Activated naive CD4-positive, alpha-beta T cell treated with anti-CD3 and anti-CD28 coated beads for 36 hours (primary cell): ENCODE measurements at regions of chr3 and their contacts with region 1.

Region 1: DNA sequence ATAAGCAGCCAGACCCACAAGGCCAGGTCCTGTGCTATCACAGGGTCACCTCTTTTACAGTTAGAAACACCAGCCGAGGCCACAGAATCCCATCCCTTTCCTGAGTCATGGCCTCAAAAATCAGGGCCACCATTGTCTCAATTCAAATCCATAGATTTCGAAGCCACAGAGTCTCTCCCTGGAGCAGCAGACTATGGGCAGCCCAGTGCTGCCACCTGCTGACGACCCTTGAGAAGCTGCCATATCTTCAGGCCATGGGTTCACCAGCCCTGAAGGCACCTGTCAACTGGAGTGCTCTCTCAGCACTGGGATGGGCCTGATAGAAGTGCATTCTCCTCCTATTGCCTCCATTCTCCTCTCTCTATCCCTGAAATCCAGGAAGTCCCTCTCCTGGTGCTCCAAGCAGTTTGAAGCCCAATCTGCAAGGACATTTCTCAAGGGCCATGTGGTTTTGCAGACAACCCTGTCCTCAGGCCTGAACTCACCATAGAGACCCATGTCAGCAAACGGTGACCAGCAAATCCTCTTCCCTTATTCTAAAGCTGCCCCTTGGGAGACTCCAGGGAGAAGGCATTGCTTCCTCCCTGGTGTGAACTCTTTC is 39.6 kb downstream of the TGM4 start:
- DNase-seq: peak; percentile 74
- H3K4me3 Mint-ChIP-seq: no peak overlapping the region
- H3K27ac Mint-ChIP-seq: no peak overlapping the region
- H3K4me1 Mint-ChIP-seq: no peaks in the 10 kb centered on the region
- H3K27me3 Mint-ChIP-seq: peaks cover 9% of the 10 kb centered on the region

Region 2: GRCh38 chr3:44323341-44323955 is 590.5 kb before region 1 on chr3:
- CTCF ChIA-PET with region 1: no interaction called
- intact Hi-C with region 1: loop called (anchors 5 kb)
- DNase-seq: peak; percentile 79
- H3K4me3 Mint-ChIP-seq: no peak overlapping the region
- H3K27ac Mint-ChIP-seq: no peak overlapping the region
- H3K4me1 Mint-ChIP-seq: peaks cover 3% of the 10 kb centered on the region
- H3K27me3 Mint-ChIP-seq: peaks cover 3% of the 10 kb centered on the region

Region 3: DNA sequence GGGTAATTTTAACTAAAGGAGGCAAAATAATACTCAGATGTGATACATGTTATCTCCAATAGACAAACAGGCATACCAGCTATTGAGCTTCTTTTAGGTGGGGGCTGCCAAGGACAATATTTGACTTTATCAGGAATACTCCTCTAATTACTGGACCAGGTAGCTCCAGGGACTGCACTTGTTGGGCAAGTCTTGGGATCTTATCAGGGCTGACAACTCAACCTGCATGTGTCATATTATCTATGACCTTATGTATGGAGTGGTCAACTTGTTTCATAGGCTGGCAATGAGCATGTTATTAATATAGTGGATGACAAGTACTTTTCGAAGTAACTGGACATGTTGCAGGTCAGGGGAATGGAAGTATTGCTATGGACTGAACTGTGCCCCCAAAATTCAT is 421.5 kb before region 1 on chr3:
- CTCF ChIA-PET with region 1: no interaction called
- intact Hi-C with region 1: no loop called
- DNase-seq: no peak
- H3K4me3 Mint-ChIP-seq: no peak overlapping the region
- H3K27ac Mint-ChIP-seq: no peak overlapping the region
- H3K4me1 Mint-ChIP-seq: no peaks in the 10 kb centered on the region
- H3K27me3 Mint-ChIP-seq: no peaks in the 10 kb centered on the region

Region 4: GRCh38 chr3:44529927-44530326 is 384.0 kb before region 1 on chr3:
- CTCF ChIA-PET with region 1: interaction called, 35 read pairs
- intact Hi-C with region 1: loop called (anchors 1 kb)
- DNase-seq: peak; percentile 44
- H3K4me3 Mint-ChIP-seq: no peak overlapping the region
- H3K27ac Mint-ChIP-seq: no peak overlapping the region
- H3K4me1 Mint-ChIP-seq: no peaks in the 10 kb centered on the region
- H3K27me3 Mint-ChIP-seq: peaks cover 17% of the 10 kb centered on the region

Region 5: GRCh38 chr3:44861412-44862220 is 52.4 kb before region 1 on chr3 and contains the start of gene TMEM42:
- CTCF ChIA-PET with region 1: no interaction called
- intact Hi-C with region 1: loop called (anchors 1 kb)
- DNase-seq: peak; percentile 86
- H3K4me3 Mint-ChIP-seq: peak within 1 kb of the TSS; percentile 84
- H3K27ac Mint-ChIP-seq: peak within 1 kb of the TSS; percentile 78
- H3K4me1 Mint-ChIP-seq: peaks cover 38% of the 10 kb centered on the region
- H3K27me3 Mint-ChIP-seq: no peaks in the 10 kb centered on the region
- total RNA-seq, gene TMEM42: 13.9 to 15.8 TPM

Region 6: GRCh38 chr3:45426161-45426560 is 512.2 kb after region 1 on chr3:
- CTCF ChIA-PET with region 1: no interaction called
- intact Hi-C with region 1: no loop called
- DNase-seq: no peak
- H3K4me3 Mint-ChIP-seq: no peak overlapping the region
- H3K27ac Mint-ChIP-seq: no peak overlapping the region
- H3K4me1 Mint-ChIP-seq: no peaks in the 10 kb centered on the region
- H3K27me3 Mint-ChIP-seq: no peaks in the 10 kb centered on the region